ENCODE measurements at regions of chrX and their contacts with region 1.

Region 1: GRCh38 chrX:23782863-23783568 is at the start of gene SAT1:
- DNase-seq: peak; percentile 94
- H3K4me3 ChIP-seq: peak within 1 kb of the TSS; percentile 54 to 65
- H3K27ac ChIP-seq: peak within 1 kb of the TSS; percentile 94 to 95
- H3K4me1 ChIP-seq: no peaks in the 10 kb centered on the region
- H3K27me3 ChIP-seq: no peaks in the 10 kb centered on the region
- CTCF ChIP-seq: peak; percentile 50 to 92 (median 86)
- POLR2A ChIP-seq: peak; percentile 94
- total RNA-seq, gene SAT1: 461 to 567 TPM

Region 2: DNA sequence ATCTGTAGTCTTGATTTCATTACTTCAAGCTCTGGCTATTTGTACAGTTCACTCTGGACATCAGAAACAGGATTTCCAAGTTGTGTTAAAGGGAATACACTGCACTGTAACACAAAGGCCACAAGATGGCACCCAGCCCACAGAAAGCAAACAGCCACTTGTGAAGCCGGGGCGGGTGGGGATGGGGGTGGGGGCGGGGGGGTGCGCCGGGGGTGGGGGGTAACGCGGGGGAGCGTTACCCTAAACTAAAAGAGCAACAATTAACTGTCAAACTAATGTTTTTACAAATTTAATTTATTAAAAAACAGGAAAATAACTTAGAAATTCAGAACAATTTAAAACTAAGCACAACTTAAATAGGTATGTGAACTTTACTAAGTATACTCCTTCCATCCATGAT is 88.4 kb before region 1 on chrX:
- intact Hi-C with region 1: loop called (anchors 5 kb)
- DNase-seq: peak; percentile 46
- H3K4me3 ChIP-seq: no peak overlapping the region
- H3K27ac ChIP-seq: no peak overlapping the region
- H3K4me1 ChIP-seq: no peaks in the 10 kb centered on the region
- H3K27me3 ChIP-seq: no peaks in the 10 kb centered on the region
- CTCF ChIP-seq: peak in 3 of 4 experiments; percentile 17 to 38 (median 30)
- POLR2A ChIP-seq: no peak

Region 3: GRCh38 chrX:23742697-23743622 is 40.1 kb before region 1 on chrX and contains the start of gene ACOT9:
- intact Hi-C with region 1: loop called (anchors 5 kb)
- DNase-seq: peak; percentile 83
- H3K4me3 ChIP-seq: peak within 1 kb of the TSS; percentile 57 to 58
- H3K27ac ChIP-seq: peak within 1 kb of the TSS; percentile 84 to 87
- H3K4me1 ChIP-seq: no peaks in the 10 kb centered on the region
- H3K27me3 ChIP-seq: no peaks in the 10 kb centered on the region
- CTCF ChIP-seq: no peak
- POLR2A ChIP-seq: peak; percentile 49
- total RNA-seq, gene ACOT9: 19.6 to 31.5 TPM

Region 4: DNA sequence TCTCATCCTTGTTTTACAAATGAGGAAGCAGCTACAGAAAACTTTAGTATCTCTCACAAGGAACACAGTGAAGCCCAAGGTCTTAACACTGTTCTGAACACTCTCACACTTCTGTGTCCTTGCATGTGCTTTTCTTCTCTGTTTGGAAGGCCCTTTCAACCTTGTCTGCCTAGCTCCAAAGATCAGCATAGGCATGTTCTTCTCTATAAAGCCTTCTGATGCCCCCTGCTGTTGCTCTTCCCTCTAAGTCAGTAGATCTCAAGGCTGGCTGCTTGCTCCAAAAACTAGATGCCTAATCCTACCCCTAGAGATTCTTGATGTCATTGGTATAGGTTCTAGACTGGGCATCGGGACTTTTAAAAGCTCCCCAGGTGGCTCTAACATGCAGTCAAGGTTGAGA is 118.8 kb after region 1 on chrX:
- intact Hi-C with region 1: loop called (anchors 1 kb)
- DNase-seq: peak; percentile 57
- H3K4me3 ChIP-seq: no peak overlapping the region
- H3K27ac ChIP-seq: peak overlapping the region; percentile 67 to 68
- H3K4me1 ChIP-seq: no peaks in the 10 kb centered on the region
- H3K27me3 ChIP-seq: no peaks in the 10 kb centered on the region
- CTCF ChIP-seq: peak in 3 of 4 experiments; percentile 52 to 72 (median 64)
- POLR2A ChIP-seq: no peak

Region 5: GRCh38 chrX:24024819-24025740 is 242.1 kb after region 1 on chrX:
- intact Hi-C with region 1: loop called (anchors 10 kb)
- DNase-seq: peak; percentile 74
- H3K4me3 ChIP-seq: peak overlapping the region; percentile 69
- H3K27ac ChIP-seq: peak overlapping the region; percentile 94 to 95
- H3K4me1 ChIP-seq: no peaks in the 10 kb centered on the region
- H3K27me3 ChIP-seq: no peaks in the 10 kb centered on the region
- CTCF ChIP-seq: peak in 2 of 4 experiments; percentile 9 to 37
- POLR2A ChIP-seq: peak; percentile 77